Activated CD4-positive, alpha-beta T cell treated with anti-CD3 and anti-CD28 coated beads, Interleukin-2, amount 10 ng/mL, durations not matched to agents 24 days and 14 days (primary cell): ENCODE measurements at regions of chr16 and their contacts with region 1.

Region 1: DNA sequence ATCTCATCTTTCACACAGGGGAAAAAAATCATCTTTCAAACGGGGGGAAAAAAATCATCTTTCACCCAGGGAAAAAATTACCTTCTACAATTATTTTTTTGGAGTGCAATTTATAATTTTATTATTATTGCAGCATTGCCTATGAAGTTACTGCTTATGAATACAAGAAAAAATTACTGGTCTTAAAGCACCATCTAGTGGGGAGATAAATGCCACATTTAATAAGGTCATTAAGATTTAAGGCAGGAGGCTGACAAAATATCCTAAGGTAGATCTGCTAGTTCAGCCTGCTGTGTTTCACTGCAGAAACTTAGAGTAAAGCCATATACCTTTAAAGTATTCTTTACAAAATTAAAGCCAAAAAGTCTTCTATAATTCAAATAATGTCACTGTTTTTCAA is 13.7 kb downstream of the SHCBP1 start:
- DNase-seq: no peak
- H3K4me3 Mint-ChIP-seq: no peak overlapping the region
- H3K27ac Mint-ChIP-seq: no peak overlapping the region
- H3K4me1 Mint-ChIP-seq: no peaks in the 10 kb centered on the region
- H3K27me3 Mint-ChIP-seq: no peaks in the 10 kb centered on the region

Region 2: DNA sequence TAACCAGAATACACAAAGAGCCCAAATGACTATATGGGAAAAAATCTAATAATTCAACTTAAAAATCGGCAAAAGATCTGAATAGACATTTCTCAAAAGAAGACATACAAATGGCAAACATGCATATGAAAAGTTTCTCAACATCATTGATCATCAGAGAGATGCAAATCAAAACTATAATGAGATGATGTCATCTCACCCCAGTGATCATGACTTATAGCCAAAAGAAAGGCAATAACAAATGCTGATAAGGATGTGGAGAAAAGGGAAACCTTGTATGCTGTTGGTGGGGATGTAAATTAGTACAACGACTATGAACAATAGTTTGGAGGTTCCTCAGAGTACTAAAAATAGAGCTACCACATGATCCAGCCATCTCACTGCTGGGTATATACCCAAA is 94.6 kb before region 1 on chr16:
- intact Hi-C with region 1: no loop called
- DNase-seq: no peak
- H3K4me3 Mint-ChIP-seq: no peak overlapping the region
- H3K27ac Mint-ChIP-seq: no peak overlapping the region
- H3K4me1 Mint-ChIP-seq: no peaks in the 10 kb centered on the region
- H3K27me3 Mint-ChIP-seq: no peaks in the 10 kb centered on the region

Region 3: DNA sequence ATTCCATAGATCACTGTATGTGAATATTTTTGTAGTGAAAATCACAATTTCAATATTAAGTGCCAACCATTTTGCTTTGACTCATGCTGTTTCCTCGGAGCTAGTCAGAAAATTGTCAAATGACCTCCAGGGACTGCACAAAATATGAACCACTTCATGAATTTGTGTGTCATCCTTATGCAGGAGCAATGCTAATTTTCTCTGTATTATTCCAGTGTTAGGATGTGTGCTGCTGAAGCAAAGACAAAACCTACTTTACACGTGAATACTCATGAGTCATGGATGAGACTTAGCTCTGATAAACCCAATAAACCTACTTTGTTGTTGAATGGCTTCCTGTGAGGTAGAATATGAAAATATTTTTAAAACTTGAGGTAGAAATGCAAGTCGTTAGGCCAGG is 51.6 kb before region 1 on chr16:
- intact Hi-C with region 1: loop called (anchors 1 kb)
- DNase-seq: no peak
- H3K4me3 Mint-ChIP-seq: no peak overlapping the region
- H3K27ac Mint-ChIP-seq: no peak overlapping the region
- H3K4me1 Mint-ChIP-seq: no peaks in the 10 kb centered on the region
- H3K27me3 Mint-ChIP-seq: peaks cover 9% of the 10 kb centered on the region

Region 4: DNA sequence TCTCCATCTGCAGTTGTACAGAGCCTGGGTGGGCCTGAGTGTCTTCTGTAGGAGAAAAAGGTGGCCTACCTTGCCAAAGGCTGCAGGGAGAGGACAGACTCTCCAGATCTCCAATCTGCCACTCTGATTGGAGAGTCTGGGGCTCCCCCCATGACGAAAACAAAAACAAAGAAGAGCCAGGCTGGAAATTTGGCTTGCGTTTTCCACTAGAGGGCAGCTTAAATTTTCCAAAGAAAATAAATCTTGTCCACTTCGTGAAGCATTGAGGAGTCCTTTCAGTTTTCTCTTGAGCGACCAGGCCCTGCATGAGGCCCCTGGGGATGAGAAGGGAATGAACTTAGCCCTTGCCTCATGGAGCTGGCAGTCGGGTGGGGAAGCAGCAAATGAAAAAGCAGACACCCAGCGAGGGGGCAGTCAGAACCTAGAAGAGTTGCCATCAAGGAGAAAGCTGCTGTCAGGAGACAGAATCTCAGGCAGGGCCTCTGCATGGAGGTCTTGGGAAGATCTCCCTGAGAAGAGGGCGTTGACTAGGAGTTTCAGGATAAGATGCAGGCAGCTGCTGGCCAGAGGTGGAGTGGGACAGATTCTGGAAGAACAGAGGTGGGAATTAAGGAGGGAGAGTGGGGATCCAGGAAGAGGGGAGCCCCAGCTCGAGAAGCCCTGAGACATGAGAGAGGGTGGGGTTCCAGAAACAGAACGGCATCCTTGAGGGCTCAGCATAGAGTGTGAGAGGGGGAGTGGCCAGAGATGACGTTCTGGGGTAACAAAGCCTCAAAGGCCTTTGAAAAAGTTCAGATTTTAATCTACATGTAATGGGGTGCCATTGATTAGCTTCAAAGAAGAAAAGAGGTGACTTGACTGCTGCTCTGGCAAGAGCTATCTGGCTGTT is 22.0 kb after region 1 on chr16:
- intact Hi-C with region 1: no loop called
- DNase-seq: no peak
- H3K4me3 Mint-ChIP-seq: no peak overlapping the region
- H3K27ac Mint-ChIP-seq: no peak overlapping the region
- H3K4me1 Mint-ChIP-seq: peaks cover 4% of the 10 kb centered on the region
- H3K27me3 Mint-ChIP-seq: no peaks in the 10 kb centered on the region